Kidney (tissue), 22 donors: ENCODE measurements at regions of chr7 and their contacts with region 1.

Region 1: DNA sequence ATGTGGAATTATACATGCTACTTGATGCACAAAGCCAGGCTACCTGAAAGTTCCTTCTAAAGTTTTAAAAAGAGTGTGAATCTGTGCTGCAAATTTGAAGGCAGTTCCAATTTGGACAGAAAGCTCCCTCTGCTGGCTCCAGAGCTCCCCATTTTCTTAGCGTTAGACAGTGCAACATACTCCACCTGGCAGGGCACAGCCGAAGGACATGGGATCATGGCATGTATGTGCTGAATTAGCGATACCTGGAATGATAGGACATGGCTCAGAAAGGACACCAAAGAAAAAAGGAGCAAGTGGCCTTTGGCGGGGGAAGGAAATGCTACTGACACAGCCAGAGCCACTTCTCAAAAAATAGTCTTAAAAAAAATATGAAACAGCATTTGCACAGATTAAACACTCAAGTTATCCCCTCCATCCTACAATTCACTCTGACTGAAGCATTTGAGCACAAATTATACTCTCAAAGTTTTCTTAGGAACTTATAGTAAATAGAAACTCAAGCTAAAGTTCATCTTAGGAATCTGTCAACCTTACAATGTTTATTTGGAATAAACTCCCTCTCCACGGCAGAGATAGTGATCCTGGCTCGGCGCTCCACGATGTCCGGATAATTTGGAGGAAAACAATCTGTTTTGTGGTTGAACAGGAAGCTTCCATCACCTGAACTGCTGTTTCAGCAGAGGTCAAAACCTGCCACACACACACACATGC is 80.0 kb downstream of the C7orf25 start:
- DNase-seq: peak in 4 of 5 donors; percentile 46 to 84 (median 70)
- H3K4me3 ChIP-seq: peak overlapping the region in 1 of 3 donors; percentile 23
- H3K27ac ChIP-seq: no peak overlapping the region
- H3K4me1 ChIP-seq: peaks cover 0 to 5% (median 5%) of the 10 kb centered on the region in 3 donors
- H3K27me3 ChIP-seq: no peaks in the 10 kb centered on the region
- CTCF ChIP-seq: peak; percentile 54

Region 2: DNA sequence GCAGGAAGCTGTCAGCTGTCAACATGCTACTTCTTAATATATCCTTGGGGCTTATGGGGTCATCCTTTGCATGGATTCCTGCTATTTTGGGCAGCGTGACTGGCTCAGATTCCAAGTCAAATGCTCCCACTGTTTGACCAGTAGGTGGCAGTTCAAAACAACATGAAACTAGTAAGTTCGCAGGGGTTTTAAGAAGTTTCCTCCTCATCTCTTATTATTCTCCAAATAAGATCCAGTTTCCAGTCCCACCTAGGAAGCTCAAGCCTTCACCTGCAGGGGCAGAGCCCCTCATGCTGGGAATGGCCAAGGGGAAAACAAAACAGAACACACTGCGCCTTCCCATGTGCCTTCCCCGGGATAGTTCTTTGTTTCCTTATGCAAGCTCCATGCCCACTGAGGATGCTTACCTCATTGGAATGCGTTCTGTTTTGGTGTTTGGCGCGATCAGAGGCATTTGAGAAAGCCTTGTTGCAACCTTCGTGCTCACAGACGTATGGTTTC is 854.7 kb before region 1 on chr7:
- intact Hi-C with region 1: loop called (anchors 10 kb)
- DNase-seq: peak in 3 of 5 donors; percentile 41 to 84 (median 70)
- H3K4me3 ChIP-seq: peak overlapping the region in 2 of 3 donors; percentile 36
- H3K27ac ChIP-seq: peak overlapping the region in 1 of 2 donors; percentile 30
- H3K4me1 ChIP-seq: peaks cover 0 to 9% (median 4%) of the 10 kb centered on the region in 3 donors
- H3K27me3 ChIP-seq: no peaks in the 10 kb centered on the region
- CTCF ChIP-seq: peak; percentile 68